Activated CD4-positive, alpha-beta T cell treated with anti-CD3 and anti-CD28 coated beads, Interleukin-2, amount 10 ng/mL, durations not matched to agents 24 days and 14 days (primary cell): ENCODE measurements at regions of chr11 and their contacts with region 1.

Region 1: DNA sequence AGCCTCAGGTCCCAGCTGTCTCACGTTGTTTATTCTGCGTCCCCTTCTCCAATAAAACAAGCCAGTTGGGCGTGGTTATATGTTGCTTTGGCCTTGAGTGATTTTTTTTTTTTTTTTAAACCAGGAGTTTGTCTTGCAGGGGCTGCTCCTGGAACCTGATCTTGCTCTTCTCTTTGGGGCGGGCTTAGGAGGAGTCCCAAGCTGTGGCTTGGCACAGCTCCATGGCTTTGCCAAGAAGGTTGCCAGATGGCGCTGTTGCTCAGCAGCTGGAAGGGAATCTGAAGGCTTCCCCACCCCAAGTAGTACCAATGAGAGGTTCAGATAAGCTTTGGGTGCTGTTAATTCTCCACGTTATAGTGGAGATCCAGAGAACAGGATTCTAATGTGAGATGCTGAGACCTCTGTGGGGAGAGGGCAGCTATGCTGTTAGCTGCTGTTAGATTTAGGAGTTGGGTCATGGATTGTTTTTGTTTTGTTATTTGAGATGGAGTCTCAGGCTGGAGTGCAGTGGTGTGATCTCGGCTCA is 2.0 kb upstream of the FERMT3 start:
- DNase-seq: peak; percentile 93
- H3K4me3 Mint-ChIP-seq: peak overlapping the region; percentile 69
- H3K27ac Mint-ChIP-seq: peak overlapping the region; percentile 80
- H3K4me1 Mint-ChIP-seq: peaks cover 33% of the 10 kb centered on the region
- H3K27me3 Mint-ChIP-seq: no peaks in the 10 kb centered on the region

Region 2: DNA sequence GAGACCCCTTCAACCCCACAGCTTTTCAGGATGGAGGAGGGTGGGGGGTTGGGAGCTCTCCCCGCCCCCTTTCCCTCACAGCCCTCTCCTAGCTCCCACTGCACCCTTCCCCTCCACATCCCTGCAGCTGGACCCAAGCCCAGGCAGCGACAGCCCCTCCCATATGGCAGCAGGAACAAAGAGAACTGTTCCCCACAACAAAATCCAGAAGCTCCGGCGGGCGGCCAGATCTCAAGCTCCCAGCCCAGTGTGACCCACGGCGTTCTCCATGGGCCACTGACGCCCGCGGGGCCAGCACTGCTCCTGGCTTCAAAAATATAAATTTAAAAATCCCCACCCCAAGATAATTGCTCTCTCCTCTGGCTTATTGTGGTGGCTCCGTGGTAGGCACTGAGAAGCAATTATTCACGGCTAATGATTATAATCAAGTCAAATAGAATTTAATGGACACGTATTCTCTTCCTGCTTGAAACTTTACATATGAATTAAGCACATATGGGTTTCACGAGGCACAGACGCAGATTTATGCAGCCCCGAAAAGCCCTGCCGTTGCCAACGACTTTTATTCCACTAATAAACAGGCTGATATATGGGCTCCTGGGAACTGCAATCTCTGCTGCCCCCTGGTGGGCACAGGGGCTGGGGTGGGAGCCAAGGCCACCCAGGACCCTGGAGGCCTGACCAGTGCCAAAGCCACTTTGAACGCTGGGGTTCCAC is 56.2 kb before region 1 on chr11:
- intact Hi-C with region 1: no loop called
- DNase-seq: peak; percentile 91
- H3K4me3 Mint-ChIP-seq: no peak overlapping the region
- H3K27ac Mint-ChIP-seq: no peak overlapping the region
- H3K4me1 Mint-ChIP-seq: peaks cover 14% of the 10 kb centered on the region
- H3K27me3 Mint-ChIP-seq: no peaks in the 10 kb centered on the region

Region 3: GRCh38 chr11:64225612-64226506 is 21.3 kb after region 1 on chr11 and contains the starts of genes NUDT22 and TRPT1:
- intact Hi-C with region 1: loop called (anchors 1 kb)
- DNase-seq: peak; percentile 99
- H3K4me3 Mint-ChIP-seq: peak within 1 kb of the TSS; percentile 91
- H3K27ac Mint-ChIP-seq: peak within 1 kb of the TSS; percentile 86
- H3K4me1 Mint-ChIP-seq: peaks cover 27% of the 10 kb centered on the region
- H3K27me3 Mint-ChIP-seq: no peaks in the 10 kb centered on the region
- total RNA-seq, gene NUDT22: 66.1 and 72.6 TPM in 2 replicates
- total RNA-seq, gene TRPT1: 29.8 and 31.7 TPM in 2 replicates